Dorsolateral prefrontal cortex (tissue), 120 donors: ENCODE measurements at regions of chr19 and their contacts with region 1.

Region 1: DNA sequence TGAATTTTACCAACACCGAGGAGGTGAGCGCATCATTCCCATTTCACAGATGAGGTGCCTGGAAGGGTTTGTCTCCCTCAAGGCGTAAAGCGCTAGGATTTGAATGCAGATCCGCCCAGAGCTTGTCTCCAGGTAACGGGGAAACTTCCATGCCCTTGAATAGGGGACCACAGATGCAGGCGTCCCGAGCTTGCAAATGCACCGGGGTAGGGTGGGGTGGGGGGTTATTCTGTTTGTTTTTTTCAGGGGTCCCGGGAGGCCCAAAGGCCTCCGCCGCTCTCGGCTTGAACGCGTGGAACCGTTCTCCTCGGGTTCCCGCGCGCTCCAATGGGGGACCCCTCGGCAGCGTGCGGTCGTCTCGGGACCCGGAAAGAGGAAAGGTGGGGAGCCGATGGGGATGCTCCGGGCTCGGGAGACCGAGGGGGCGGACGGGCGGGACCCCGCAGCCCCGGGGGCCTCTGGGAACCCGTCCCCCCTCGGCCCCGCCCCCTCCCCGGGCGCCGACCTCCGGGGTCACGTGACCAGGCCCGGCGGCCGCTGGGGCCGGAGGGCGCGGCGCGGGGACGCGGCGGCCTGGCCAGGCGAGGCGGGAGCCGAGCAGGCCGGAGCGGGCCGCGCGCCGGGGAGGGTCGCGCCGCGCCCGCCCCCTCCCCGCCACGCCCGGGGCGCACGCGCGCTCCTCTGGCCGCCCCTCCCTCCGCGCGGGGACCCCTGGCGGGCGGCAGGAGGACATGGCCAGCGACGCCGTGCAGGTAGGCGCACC is at the start of gene PKN1:
- DNase-seq: peak in 5 of 10 donors; percentile 41 to 77 (median 47)
- H3K4me3 ChIP-seq: peak within 1 kb of the TSS; percentile 52 to 92 (median 80)
- H3K27ac ChIP-seq: peak within 1 kb of the TSS; percentile 57 to 96 (median 88)
- H3K27me3 ChIP-seq: no peaks in the 10 kb centered on the region
- CTCF ChIP-seq: peak in 6 of 56 donors; percentile 5 to 34 (median 11)
- total RNA-seq, gene PKN1: 45.9 to 129 (median 73.3) TPM

Region 2: GRCh38 chr19:14472202-14472938 is 39.4 kb after region 1 on chr19:
- intact Hi-C with region 1: loop called (anchors 5 kb)
- DNase-seq: peak in 9 of 10 donors; percentile 47 to 74 (median 61)
- H3K4me3 ChIP-seq: peak overlapping the region in 46 of 59 donors; percentile 2 to 47 (median 27)
- H3K27ac ChIP-seq: peak overlapping the region in 4 of 59 donors; percentile 15 to 57 (median 22)
- H3K27me3 ChIP-seq: peaks cover 0 to 14% (median 0%) of the 10 kb centered on the region in 45 donors
- CTCF ChIP-seq: peak; percentile 71 to 99 (median 96)

Region 3: GRCh38 chr19:14577885-14578427 is 145.0 kb after region 1 on chr19:
- intact Hi-C with region 1: no loop called
- DNase-seq: no peak
- H3K4me3 ChIP-seq: no peak overlapping the region
- H3K27ac ChIP-seq: no peak overlapping the region
- H3K27me3 ChIP-seq: no peaks in the 10 kb centered on the region
- CTCF ChIP-seq: no peak